ENCODE measurements at regions of chr12 and their contacts with region 1.

Region 1: DNA sequence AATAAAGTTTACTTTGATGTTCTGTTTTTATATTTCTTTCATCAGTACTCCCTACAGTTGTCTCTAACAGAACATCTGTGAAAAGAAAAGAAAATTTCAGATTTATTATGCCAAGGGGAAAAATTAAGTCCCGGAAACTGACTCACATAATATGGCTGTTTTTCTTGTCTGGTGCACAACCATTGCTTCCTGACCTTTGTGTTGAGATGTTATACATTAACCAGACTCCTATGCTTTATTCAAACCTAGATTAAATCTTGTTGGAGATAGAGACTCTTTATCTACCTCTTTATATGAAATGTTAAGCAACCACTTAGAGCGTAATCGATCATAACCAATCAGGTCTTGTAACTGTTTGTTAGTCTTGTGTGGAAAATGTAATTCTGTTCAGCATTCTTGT is 37.6 kb upstream of the BICD1 start:
- DNase-seq: no peak

Region 2: GRCh38 chr12:31682136-31682962 is 386.7 kb before region 1 on chr12:
- intact Hi-C with region 1: loop called (anchors 10 kb)
- DNase-seq: peak; percentile 78